ENCODE measurements at regions of chr12 and their contacts with region 1.

Region 1: GRCh38 chr12:45543906-45544315 is 185.6 kb upstream of the ARID2 start:
- DNase-seq: peak; percentile 70
- ATAC-seq: peak; percentile 97
- H3K4me3 Mint-ChIP-seq: no peak overlapping the region
- H3K27ac Mint-ChIP-seq: no peak overlapping the region
- H3K4me1 Mint-ChIP-seq: peaks cover 5% of the 10 kb centered on the region
- H3K27me3 Mint-ChIP-seq: peaks cover 10% of the 10 kb centered on the region

Region 2: GRCh38 chr12:45532113-45532512 is 11.8 kb before region 1 on chr12:
- CTCF ChIA-PET with region 1: interaction called, 11 read pairs
- DNase-seq: no peak
- ATAC-seq: no peak
- H3K4me3 Mint-ChIP-seq: no peak overlapping the region
- H3K27ac Mint-ChIP-seq: no peak overlapping the region
- H3K4me1 Mint-ChIP-seq: no peaks in the 10 kb centered on the region
- H3K27me3 Mint-ChIP-seq: peaks cover 18% of the 10 kb centered on the region

Region 3: DNA sequence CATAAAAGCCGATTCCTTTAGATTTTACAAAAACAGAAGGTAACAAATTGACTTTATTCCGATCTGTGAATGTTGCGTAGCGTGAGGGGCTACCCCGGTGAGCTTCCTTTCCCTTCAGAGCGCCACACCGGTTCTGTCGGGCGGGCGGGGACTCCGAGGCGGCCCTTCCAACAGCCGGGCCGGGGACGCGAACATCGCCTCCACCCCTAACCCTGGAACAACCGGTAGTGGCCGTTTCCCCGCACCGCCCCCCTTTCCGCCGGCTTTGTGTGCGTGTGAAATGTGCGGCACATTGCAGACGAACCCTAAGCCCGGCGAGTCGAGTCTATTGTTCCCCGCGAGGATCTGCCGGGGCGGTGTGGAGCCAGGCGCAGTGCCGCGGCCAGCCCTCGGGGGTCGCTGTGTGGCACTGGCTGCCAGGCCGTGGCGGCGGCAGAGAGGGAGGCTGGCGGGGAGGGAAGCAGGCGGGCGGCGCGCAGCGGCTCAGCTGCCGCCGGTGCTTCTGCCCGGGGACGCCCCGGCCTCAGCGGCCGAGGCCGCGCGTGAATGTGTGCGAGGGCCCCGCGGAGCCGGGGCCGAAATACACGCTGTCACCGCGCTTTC is 184.8 kb after region 1 on chr12:
- CTCF ChIA-PET with region 1: interaction called, 59 read pairs
- DNase-seq: peak; percentile 98
- ATAC-seq: peak; percentile 70
- H3K4me3 Mint-ChIP-seq: peak overlapping the region; percentile 95
- H3K27ac Mint-ChIP-seq: peak overlapping the region; percentile 100
- H3K4me1 Mint-ChIP-seq: peaks cover 19% of the 10 kb centered on the region
- H3K27me3 Mint-ChIP-seq: no peaks in the 10 kb centered on the region

Region 4: GRCh38 chr12:45745861-45746277 is 202.0 kb after region 1 on chr12:
- CTCF ChIA-PET with region 1: interaction called, 44 read pairs
- DNase-seq: no peak
- ATAC-seq: peak; percentile 36
- H3K4me3 Mint-ChIP-seq: no peak overlapping the region
- H3K27ac Mint-ChIP-seq: no peak overlapping the region
- H3K4me1 Mint-ChIP-seq: peaks cover 20% of the 10 kb centered on the region
- H3K27me3 Mint-ChIP-seq: no peaks in the 10 kb centered on the region

Measured in activated CD8-positive, alpha-beta memory T cell treated with anti-CD3 and anti-CD28 coated beads, Interleukin-2, amount 10 ng/mL, durations not matched to agents 7 days and 5 days (primary cell).